Activated CD4-positive, alpha-beta T cell treated with anti-CD3 and anti-CD28 coated beads, Interleukin-2, amount 10 ng/mL, durations not matched to agents 24 days and 14 days (primary cell): ENCODE measurements at regions of chr6 and their contacts with region 1.

Region 1: DNA sequence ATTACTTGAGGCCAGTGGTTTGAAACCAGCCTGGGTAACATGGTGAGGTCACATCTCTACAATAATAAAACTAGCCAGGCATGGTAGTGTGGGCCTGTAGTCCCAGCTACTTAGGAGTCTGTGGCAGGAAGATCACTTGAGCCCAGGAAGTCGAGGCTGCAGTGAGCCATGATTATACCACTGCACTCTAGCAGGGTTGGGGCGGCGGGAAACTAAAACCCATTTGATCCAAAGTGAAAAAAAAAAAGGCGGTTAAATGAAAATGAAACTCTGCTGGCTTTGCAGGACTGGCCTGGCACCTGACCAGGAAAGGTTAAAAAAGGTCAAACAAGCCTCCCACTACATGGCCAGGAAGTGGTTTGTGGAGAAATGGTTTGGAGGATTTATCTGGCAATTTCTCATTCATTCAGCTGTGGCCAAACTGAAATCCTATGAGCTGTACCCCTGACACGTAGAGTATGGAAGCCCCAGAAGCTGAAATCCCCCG is 36.6 kb downstream of the MTRES1 start:
- DNase-seq: peak; percentile 74
- H3K4me3 Mint-ChIP-seq: peak overlapping the region; percentile 41
- H3K27ac Mint-ChIP-seq: peak overlapping the region; percentile 75
- H3K4me1 Mint-ChIP-seq: peaks cover 37% of the 10 kb centered on the region
- H3K27me3 Mint-ChIP-seq: no peaks in the 10 kb centered on the region

Region 2: GRCh38 chr6:106731144-106731842 is 333.3 kb before region 1 on chr6:
- intact Hi-C with region 1: no loop called
- DNase-seq: no peak
- H3K4me3 Mint-ChIP-seq: no peak overlapping the region
- H3K27ac Mint-ChIP-seq: no peak overlapping the region
- H3K4me1 Mint-ChIP-seq: no peaks in the 10 kb centered on the region
- H3K27me3 Mint-ChIP-seq: peaks cover 9% of the 10 kb centered on the region

Region 3: DNA sequence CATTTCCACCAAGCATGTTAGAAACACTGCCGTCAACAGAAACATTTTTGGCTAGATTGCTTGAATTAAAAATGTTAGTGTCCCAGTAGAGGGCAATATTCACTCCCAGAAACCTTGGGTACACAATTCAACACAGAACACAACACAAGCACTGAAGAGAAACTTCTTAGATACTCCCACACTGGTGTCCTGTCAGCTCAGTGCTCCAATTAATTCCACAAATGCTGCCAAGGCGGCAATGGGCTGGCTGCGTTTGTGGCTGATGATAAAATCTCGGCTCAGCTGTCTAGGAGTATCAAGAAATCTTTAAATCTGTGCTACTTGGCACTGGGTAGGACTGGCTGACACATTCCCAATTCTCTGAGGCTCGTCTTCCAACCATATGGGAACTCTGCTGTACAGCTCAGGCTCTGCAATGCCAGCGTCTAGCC is 11.3 kb after region 1 on chr6:
- intact Hi-C with region 1: no loop called
- DNase-seq: no peak
- H3K4me3 Mint-ChIP-seq: no peak overlapping the region
- H3K27ac Mint-ChIP-seq: no peak overlapping the region
- H3K4me1 Mint-ChIP-seq: peaks cover 3% of the 10 kb centered on the region
- H3K27me3 Mint-ChIP-seq: no peaks in the 10 kb centered on the region

Region 4: GRCh38 chr6:107093644-107094043 is 29.0 kb after region 1 on chr6:
- intact Hi-C with region 1: no loop called
- DNase-seq: no peak
- H3K4me3 Mint-ChIP-seq: no peak overlapping the region
- H3K27ac Mint-ChIP-seq: no peak overlapping the region
- H3K4me1 Mint-ChIP-seq: no peaks in the 10 kb centered on the region
- H3K27me3 Mint-ChIP-seq: no peaks in the 10 kb centered on the region

Region 5: DNA sequence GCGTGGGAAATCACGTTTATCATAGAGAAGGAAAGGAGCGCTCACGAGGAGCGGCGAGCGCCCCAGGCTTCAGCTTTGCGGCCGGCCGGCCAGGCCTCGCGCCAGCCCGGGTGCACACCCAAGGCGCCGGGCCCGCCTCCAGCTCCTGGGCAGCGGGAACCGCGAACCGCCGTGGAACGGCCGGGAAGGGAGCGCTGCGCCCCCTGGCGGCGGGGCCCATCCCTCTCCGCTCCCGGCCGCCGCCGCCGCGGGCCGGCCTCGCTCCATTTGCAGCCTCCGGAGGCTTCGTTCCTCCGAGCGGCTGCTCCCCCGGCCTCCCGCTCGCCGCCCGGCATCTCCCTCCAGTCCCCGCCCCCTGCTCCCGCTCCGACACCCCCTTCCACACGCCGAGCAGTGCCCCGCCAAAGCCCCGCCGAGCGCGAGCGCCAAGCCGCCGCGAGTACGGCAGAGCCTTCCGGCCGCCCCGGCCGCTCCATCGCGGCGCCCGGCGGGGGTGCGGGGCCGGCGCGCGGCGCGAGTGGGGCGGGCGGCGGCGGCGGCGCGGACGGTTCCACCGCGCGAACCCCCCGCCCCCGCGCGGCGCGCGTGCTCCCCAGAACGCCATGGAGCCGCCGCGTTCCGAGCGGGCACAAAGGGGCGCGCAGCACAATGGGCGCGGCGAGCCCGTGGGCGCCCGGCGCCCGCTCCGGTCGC is 49.7 kb after region 1 on chr6:
- intact Hi-C with region 1: loop called (anchors 2 kb)
- DNase-seq: peak; percentile 93
- H3K4me3 Mint-ChIP-seq: peak overlapping the region; percentile 84
- H3K27ac Mint-ChIP-seq: peak overlapping the region; percentile 77
- H3K4me1 Mint-ChIP-seq: peaks cover 18% of the 10 kb centered on the region
- H3K27me3 Mint-ChIP-seq: peaks cover 20% of the 10 kb centered on the region